Activated CD4-positive, alpha-beta memory T cell treated with anti-CD3 and anti-CD28 coated beads for 36 hours (primary cell): ENCODE measurements at regions of chr15 and their contacts with region 1.

Region 1: DNA sequence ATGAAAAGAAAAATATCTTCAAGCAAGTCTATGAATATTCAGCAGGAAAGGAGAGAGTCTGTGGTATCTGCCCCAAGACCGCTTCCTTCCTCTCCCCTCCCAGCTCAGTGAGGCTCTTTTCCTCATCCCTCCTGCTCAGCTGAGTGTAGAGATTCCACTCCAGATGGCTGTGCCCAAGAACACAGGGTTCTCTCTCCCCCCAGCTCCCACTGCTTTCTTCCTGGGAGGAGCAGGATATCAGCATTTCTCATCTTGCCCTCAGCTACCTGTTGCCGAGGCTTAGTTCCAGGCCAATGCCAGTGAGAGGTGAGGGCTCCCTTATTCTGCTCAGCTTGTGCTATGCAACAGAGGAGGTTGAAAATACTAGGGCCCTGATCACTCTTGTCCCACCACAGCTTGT is 211.9 kb downstream of the SV2B start:
- DNase-seq: peak; percentile 44
- H3K4me3 Mint-ChIP-seq: no peak overlapping the region
- H3K27ac Mint-ChIP-seq: no peak overlapping the region
- H3K4me1 Mint-ChIP-seq: peaks cover 62% of the 10 kb centered on the region
- H3K27me3 Mint-ChIP-seq: peaks cover 3% of the 10 kb centered on the region

Region 2: GRCh38 chr15:90970274-90970673 is 341.7 kb before region 1 on chr15:
- CTCF ChIA-PET with region 1: no interaction called
- POLR2A ChIA-PET with region 1: no interaction called
- intact Hi-C with region 1: no loop called
- DNase-seq: no peak
- H3K4me3 Mint-ChIP-seq: no peak overlapping the region
- H3K27ac Mint-ChIP-seq: no peak overlapping the region
- H3K4me1 Mint-ChIP-seq: no peaks in the 10 kb centered on the region
- H3K27me3 Mint-ChIP-seq: no peaks in the 10 kb centered on the region

Region 3: DNA sequence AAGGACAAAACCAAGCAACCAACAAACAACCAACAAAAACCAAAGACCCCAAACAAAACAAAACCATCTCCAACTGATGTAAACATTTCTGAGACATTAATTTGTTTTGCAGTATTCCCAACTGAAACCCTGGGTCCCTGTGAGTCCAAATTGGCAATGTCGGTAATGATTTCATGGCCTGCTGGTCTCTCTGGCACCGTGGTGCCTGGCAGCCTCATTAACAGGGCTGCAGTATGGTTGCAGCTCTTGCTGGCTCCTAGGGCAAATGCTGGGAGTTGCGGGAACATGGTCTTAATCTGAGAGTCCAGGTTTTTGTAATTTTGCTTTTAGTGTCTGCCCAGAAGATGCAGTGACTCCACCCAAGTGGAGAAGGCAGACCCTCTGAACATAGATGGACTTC is 83.6 kb before region 1 on chr15:
- CTCF ChIA-PET with region 1: no interaction called
- POLR2A ChIA-PET with region 1: no interaction called
- intact Hi-C with region 1: no loop called
- DNase-seq: no peak
- H3K4me3 Mint-ChIP-seq: no peak overlapping the region
- H3K27ac Mint-ChIP-seq: no peak overlapping the region
- H3K4me1 Mint-ChIP-seq: no peaks in the 10 kb centered on the region
- H3K27me3 Mint-ChIP-seq: peaks cover 15% of the 10 kb centered on the region

Region 4: GRCh38 chr15:91338766-91339165 is 26.8 kb after region 1 on chr15:
- CTCF ChIA-PET with region 1: no interaction called
- POLR2A ChIA-PET with region 1: no interaction called
- intact Hi-C with region 1: no loop called
- DNase-seq: peak; percentile 31
- H3K4me3 Mint-ChIP-seq: no peak overlapping the region
- H3K27ac Mint-ChIP-seq: no peak overlapping the region
- H3K4me1 Mint-ChIP-seq: peaks cover 23% of the 10 kb centered on the region
- H3K27me3 Mint-ChIP-seq: peaks cover 4% of the 10 kb centered on the region

Region 5: GRCh38 chr15:91426412-91426811 is 114.4 kb after region 1 on chr15:
- CTCF ChIA-PET with region 1: no interaction called
- POLR2A ChIA-PET with region 1: no interaction called
- intact Hi-C with region 1: loop called (anchors 5 kb)
- DNase-seq: peak; percentile 75
- H3K4me3 Mint-ChIP-seq: no peak overlapping the region
- H3K27ac Mint-ChIP-seq: no peak overlapping the region
- H3K4me1 Mint-ChIP-seq: peaks cover 51% of the 10 kb centered on the region
- H3K27me3 Mint-ChIP-seq: no peaks in the 10 kb centered on the region

Region 6: DNA sequence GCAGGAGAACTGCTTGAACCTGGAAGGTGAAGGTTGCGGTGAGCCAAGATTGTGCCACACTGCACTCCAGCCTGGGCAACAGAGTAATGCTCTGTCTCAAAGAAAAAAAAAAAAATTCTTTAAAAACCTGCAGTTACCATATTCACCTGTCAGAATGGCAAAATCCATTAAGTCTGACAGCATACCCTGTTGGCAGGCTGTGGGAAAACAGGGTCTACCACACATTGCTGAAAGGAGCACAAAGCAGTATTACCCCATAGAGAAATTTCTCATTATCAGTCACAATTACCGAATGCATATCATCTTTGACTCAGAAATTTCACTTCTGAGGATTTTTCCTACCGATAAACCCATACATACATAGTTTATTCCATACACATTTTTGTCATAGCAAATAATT is 277.4 kb after region 1 on chr15:
- CTCF ChIA-PET with region 1: no interaction called
- POLR2A ChIA-PET with region 1: no interaction called
- intact Hi-C with region 1: loop called (anchors 1 kb)
- DNase-seq: peak; percentile 22
- H3K4me3 Mint-ChIP-seq: no peak overlapping the region
- H3K27ac Mint-ChIP-seq: no peak overlapping the region
- H3K4me1 Mint-ChIP-seq: peaks cover 4% of the 10 kb centered on the region
- H3K27me3 Mint-ChIP-seq: peaks cover 3% of the 10 kb centered on the region